ENCODE measurements at regions of chr11 and their contacts with region 1.

Region 1: GRCh38 chr11:1546536-1547400 is 25.3 kb downstream of the DUSP8 start:
- DNase-seq: peak; percentile 97
- H3K4me3 ChIP-seq: peak overlapping the region; percentile 37 to 49; a peak in 3 of 4 replicates
- H3K27ac ChIP-seq: no peak overlapping the region
- H3K4me1 ChIP-seq: peaks cover 0 to 6% of the 10 kb centered on the region in 2 experiments; a peak in 1 of 4 replicates
- H3K27me3 ChIP-seq: peaks cover 12% of the 10 kb centered on the region
- CTCF ChIP-seq: peak; percentile 72
- EP300 ChIP-seq: no peak
- RAD21 ChIP-seq: peak; percentile 76

Region 2: GRCh38 chr11:1536065-1536843 is 10.5 kb before region 1 on chr11:
- CTCF ChIA-PET with region 1: interaction called, 15 read pairs
- POLR2A ChIA-PET with region 1: no interaction called
- DNase-seq: no peak
- H3K4me3 ChIP-seq: no peak overlapping the region
- H3K27ac ChIP-seq: no peak overlapping the region
- H3K4me1 ChIP-seq: peaks cover 0 to 16% of the 10 kb centered on the region in 2 experiments; a peak in 1 of 4 replicates
- H3K27me3 ChIP-seq: peaks cover 7% of the 10 kb centered on the region; the same call in 1 of the 2 replicates
- CTCF ChIP-seq: no peak
- EP300 ChIP-seq: no peak
- RAD21 ChIP-seq: no peak

Region 3: GRCh38 chr11:1559119-1559951 is 12.6 kb after region 1 on chr11:
- CTCF ChIA-PET with region 1: interaction called, 398 read pairs
- POLR2A ChIA-PET with region 1: no interaction called
- DNase-seq: peak; percentile 52
- H3K4me3 ChIP-seq: no peak overlapping the region
- H3K27ac ChIP-seq: peak overlapping the region in 1 of 2 experiments; percentile 71; a peak in 2 of 4 replicates
- H3K4me1 ChIP-seq: peaks cover 3 to 12% of the 10 kb centered on the region in 2 experiments; a peak in 2 of 4 replicates
- H3K27me3 ChIP-seq: no peaks in the 10 kb centered on the region
- CTCF ChIP-seq: no peak
- EP300 ChIP-seq: no peak
- RAD21 ChIP-seq: no peak

Region 4: GRCh38 chr11:1592628-1593027 is 45.9 kb after region 1 on chr11:
- CTCF ChIA-PET with region 1: interaction called, 24 read pairs
- POLR2A ChIA-PET with region 1: no interaction called
- DNase-seq: no peak
- H3K4me3 ChIP-seq: no peak overlapping the region
- H3K27ac ChIP-seq: no peak overlapping the region
- H3K4me1 ChIP-seq: no peaks in the 10 kb centered on the region
- H3K27me3 ChIP-seq: peaks cover 7% of the 10 kb centered on the region
- CTCF ChIP-seq: no peak
- EP300 ChIP-seq: no peak
- RAD21 ChIP-seq: no peak

Region 5: DNA sequence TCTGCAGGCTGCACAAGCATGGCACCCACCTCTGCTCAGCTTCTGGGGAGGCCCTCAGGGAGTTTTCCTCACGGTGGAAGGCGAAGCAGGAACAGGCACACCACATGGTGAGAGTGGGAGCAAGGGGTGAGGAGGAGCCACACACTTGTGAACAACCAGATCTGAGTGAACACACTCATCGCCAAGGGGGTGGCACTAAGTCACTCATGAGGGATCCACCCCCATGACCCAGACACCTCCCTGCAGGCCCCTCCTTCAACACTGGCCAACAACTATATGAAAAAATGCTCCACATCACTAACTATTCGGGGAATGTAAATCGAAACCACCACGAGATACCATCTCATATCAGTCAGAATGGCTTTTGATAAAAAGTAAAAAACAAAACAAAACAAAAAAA is 52.0 kb after region 1 on chr11:
- CTCF ChIA-PET with region 1: interaction called, 24 read pairs
- POLR2A ChIA-PET with region 1: no interaction called
- DNase-seq: no peak
- H3K4me3 ChIP-seq: no peak overlapping the region
- H3K27ac ChIP-seq: no peak overlapping the region
- H3K4me1 ChIP-seq: no peaks in the 10 kb centered on the region
- H3K27me3 ChIP-seq: peaks cover 22% of the 10 kb centered on the region
- CTCF ChIP-seq: no peak
- EP300 ChIP-seq: no peak
- RAD21 ChIP-seq: no peak

Region 6: DNA sequence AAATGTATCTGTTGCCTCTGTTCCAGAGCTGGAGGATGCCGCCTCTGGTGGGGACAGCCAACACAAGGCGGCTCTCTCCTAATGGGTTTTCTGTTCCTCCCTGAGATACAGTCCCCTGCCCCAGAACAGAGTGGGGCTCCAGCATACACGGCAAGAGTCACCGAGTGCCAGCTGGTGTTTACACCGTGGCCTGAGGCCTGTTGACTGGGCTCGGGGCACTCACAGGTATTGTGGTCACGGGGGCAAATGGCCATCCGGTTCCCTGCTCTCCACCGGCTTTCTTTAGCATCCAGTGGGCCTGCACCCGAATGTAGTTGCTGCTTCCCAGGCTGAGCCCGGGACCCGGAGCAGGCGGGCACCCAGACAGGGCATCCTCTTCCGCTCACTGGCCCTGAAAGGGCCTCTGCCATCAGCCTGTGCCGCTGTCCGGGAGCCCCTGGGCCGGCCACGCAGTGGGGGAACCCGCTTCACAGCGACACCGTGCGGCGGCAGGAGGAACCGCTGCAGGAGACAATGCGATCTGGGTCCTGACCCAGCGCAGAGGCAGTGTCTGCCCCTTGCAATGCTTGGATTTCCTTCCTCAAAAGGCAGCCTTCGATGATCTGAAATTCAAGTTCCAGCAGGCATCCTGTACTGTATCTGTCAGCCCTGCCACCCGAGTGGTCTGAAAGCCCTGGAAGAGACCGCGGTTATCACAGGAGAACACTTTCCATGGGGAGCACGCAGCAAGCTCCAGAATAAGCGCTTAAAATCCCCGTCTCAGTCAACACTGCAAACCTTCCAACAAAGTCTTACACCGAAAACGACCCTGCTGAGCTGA is 81.9 kb after region 1 on chr11:
- CTCF ChIA-PET with region 1: interaction called, 29 read pairs
- POLR2A ChIA-PET with region 1: no interaction called
- DNase-seq: peak; percentile 96
- H3K4me3 ChIP-seq: peak overlapping the region in 1 of 2 experiments; percentile 35; a peak in 1 of 4 replicates
- H3K27ac ChIP-seq: no peak overlapping the region
- H3K4me1 ChIP-seq: peaks cover 0 to 11% of the 10 kb centered on the region in 2 experiments; a peak in 1 of 4 replicates
- H3K27me3 ChIP-seq: peaks cover 19% of the 10 kb centered on the region; the same call in 1 of the 2 replicates
- CTCF ChIP-seq: peak; percentile 85
- EP300 ChIP-seq: no peak
- RAD21 ChIP-seq: peak; percentile 69